ENCODE measurements at regions of chr9 and their contacts with region 1.

Region 1: DNA sequence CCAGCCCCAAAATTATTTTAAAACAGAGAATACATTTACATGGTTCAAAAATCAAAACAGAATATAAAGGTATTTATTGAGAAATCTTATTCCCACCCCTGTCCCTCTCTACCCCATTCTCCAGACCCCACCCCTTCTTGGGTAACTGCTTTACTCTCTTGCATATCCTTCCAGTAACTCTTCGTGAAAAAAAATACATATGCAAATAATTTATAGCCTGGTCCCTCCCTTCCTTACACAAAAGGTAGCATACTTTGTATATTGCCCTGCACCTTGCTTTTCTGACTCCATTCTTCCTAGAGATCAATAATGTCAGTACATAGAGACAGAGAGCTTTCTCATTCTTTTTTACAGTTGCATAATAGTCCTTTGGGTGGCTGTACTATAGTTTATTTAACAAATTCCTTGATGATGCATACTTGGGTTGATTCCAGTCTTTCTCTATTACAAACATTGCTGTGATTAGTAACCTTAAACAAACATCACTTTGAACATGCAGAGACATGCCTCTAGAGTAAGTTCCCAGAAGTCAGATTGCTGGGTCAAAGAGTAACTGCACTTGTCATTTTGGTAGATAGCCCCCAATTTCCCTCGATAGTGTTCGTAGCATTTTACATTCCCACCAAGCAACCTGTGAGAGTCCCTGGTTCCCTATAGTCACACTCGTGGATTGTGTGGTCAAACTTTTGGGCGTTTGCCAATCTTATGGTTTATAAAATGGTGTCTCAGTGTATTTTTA is 47.8 kb downstream of the STOM start:
- DNase-seq: peak; percentile 87
- H3K4me3 ChIP-seq: no peak overlapping the region
- CTCF ChIP-seq: no peak

Region 2: DNA sequence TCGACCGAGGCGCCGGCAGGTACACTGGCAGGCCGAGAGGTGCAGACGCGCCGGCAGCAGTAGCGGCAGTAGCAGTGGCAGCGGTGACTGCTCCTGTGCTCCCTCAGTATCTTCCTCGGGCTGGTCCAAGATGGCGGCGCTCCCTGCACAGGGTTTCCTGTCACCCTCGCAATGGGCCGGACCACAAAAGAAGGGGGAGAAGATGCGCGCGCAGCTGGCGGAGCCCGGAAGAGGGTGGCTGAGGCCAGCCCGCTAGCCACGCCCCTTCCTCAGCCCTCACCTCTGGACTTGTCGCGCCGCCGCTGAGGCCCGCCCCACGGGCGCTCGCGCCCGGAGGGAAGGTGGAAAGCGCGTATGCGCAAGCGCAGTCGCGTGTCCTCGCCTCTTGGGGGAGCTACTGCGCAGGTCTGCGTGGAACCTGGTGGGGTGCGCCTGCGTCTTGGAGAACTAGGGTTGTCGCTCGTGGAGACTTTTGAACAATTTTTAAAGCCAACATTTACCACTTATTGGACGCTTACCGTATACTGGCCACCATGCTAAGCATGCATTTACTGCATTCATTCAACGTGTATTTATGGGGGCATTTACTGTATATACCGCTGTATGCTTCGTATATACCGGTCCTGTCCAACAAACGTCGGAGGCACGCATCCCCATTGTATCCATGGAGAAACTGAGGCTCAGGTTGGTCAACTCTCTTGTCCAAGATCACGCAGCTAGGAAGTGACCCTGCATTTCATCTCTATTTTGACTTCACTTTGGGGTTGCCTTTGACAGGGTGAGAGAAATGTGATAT is 120.3 kb before region 1 on chr9 and contains the start of gene RAB14:
- CTCF ChIA-PET with region 1: interaction called, 15 read pairs
- POLR2A ChIA-PET with region 1: no interaction called
- DNase-seq: peak; percentile 67
- H3K4me3 ChIP-seq: peak within 1 kb of the TSS; percentile 82
- CTCF ChIP-seq: peak; percentile 70

Region 3: DNA sequence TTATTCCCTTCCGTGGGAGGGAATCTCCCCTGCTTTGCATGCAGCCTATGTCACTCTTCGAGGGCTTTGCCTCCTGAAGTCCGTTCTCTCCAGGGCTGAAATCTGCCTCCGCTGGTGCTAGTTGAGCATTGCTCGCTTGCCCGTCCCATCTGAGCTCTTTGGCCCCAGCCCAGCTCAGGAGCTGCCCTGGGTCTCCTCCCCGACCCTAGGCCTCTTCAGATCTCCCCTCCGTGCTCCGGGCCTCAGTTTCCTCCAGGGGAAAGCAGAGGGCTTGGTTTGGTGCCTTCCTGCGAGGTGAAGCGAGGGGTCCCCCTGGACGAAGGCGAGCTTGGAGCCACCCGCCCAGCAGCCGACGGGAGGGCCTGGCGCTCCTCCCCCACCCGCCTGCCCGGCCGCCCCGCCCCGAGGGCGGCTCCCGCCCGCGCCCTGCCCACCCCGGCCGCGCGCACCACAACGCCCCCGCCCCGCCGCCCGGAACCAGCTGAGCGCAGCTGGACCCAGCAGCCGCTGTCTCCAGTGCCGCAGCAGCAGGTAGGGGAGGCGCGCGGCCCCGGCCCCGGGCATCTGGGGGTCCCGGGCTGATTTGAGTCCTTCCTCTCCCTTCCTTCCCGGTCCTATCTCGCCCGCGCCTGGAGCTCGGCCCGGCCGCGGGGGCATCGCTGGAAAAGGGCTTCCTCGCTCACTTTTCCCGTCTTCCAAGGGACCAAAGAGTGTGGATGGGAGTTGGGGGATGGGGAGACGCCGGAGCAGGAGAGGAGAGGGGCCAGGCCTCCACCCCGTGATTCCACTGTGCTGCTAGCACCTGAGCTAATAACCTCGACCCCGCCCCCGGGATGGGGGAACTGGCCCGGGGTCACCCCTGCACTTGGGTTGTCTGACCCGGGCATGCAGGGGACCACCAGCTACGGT is 54.3 kb before region 1 on chr9 and contains the start of gene GSN:
- CTCF ChIA-PET with region 1: interaction called, 32 read pairs
- POLR2A ChIA-PET with region 1: no interaction called
- DNase-seq: no peak
- H3K4me3 ChIP-seq: peak within 1 kb of the TSS; percentile 91
- CTCF ChIP-seq: no peak

Region 4: GRCh38 chr9:121299467-121300234 is 22.6 kb before region 1 on chr9:
- CTCF ChIA-PET with region 1: interaction called, 231 read pairs
- POLR2A ChIA-PET with region 1: no interaction called
- DNase-seq: no peak
- H3K4me3 ChIP-seq: peak overlapping the region; percentile 45
- CTCF ChIP-seq: no peak

Region 5: DNA sequence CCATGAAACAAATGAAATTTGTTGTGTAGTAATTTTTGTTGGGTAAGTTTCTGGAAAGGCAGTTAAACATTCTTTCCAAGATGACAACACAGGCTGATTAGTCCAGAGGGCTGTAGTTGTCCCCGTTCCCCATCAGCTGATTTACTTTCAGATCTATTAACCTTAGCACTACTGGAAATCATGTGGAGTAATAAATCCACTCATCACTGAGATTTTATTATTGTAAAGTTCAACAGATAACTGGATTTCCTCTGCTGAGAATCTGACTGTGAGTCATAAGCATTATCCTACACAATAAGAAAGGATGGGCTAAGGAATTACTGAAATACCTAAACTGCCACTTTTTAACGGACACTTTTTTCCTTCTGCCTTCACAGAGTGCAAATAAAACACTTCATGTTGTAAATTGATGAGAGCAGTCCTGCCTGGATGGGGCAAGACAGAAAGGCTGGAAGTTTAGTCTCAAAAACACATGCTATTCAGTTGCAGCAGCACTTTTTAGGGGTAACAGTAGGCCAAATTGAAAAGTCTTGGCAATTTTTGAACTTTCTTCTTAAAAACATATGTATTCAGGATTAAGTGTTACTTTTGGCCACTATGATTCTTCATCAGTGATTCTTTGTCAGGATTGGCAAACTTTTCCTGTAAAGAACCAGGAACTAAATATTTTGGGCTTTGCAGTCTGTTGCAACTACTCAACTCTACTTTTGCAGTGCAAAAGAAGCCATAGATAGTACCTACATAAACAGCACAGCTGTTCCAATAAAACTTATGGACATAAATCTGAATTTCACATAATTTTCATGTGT is 40.8 kb after region 1 on chr9:
- CTCF ChIA-PET with region 1: interaction called, 34 read pairs
- POLR2A ChIA-PET with region 1: no interaction called
- DNase-seq: peak; percentile 55
- H3K4me3 ChIP-seq: no peak overlapping the region; the same call in 1 of the 2 replicates
- CTCF ChIP-seq: no peak

Region 6: GRCh38 chr9:121399883-121400607 is 77.8 kb after region 1 on chr9:
- CTCF ChIA-PET with region 1: interaction called, 597 read pairs
- POLR2A ChIA-PET with region 1: interaction called, 4 read pairs
- DNase-seq: peak; percentile 37
- H3K4me3 ChIP-seq: no peak overlapping the region
- CTCF ChIP-seq: peak; percentile 28

Region 7: GRCh38 chr9:121566481-121567465 is 244.6 kb after region 1 on chr9:
- CTCF ChIA-PET with region 1: no interaction called
- POLR2A ChIA-PET with region 1: no interaction called
- DNase-seq: no peak
- H3K4me3 ChIP-seq: peak overlapping the region; percentile 54
- CTCF ChIP-seq: no peak

Measured in AG04449 (cell line).